BJ (cell line): ENCODE measurements at regions of chr2 and their contacts with region 1.

Region 1: GRCh38 chr2:164706522-164706921 is 85.2 kb upstream of the GRB14 start:
- DNase-seq: peak; percentile 76
- H3K4me3 ChIP-seq: no peak overlapping the region
- H3K27me3 ChIP-seq: no peaks in the 10 kb centered on the region
- CTCF ChIP-seq: no peak

Region 2: DNA sequence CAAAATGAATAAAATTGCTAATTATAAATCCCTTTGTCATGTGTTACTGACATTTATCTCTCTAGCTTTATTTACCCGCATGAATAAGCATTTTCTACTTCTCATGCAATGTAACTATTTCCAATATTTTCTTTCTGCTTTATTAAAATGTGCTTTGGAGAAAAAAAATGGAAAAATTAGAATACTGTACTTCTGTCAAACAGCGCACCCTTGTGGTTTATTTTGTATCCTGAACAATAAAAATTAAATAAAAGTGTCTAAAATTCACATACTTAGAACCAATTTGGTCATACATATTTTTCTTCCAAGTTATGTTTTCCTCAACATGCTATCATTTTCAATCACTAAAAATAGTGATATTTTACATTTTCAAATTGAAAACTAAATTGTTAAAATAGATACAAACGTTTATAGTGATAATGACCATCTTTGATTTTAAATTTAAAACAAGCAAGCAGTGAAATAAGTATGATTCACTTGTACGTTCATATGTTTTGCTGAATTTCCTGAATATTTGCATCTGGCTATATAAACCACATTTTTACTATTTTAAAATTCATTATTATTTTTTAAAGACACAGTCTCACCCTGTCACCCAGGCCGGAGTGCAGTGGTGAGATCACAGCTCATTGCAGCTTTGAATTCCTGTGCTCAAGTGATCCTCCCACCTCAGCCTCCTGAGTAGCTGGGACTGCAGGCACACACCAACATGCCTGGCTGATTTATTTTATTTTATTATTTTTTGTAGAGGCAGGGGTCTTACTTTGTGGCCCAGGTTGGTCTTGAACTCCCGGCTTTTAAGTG is 10.7 kb after region 1 on chr2:
- CTCF ChIA-PET with region 1: interaction called, 11 read pairs
- POLR2A ChIA-PET with region 1: no interaction called
- DNase-seq: no peak
- H3K4me3 ChIP-seq: no peak overlapping the region
- H3K27me3 ChIP-seq: no peaks in the 10 kb centered on the region
- CTCF ChIP-seq: peak; percentile 40